ENCODE measurements at regions of chr12 and their contacts with region 1.

Region 1: DNA sequence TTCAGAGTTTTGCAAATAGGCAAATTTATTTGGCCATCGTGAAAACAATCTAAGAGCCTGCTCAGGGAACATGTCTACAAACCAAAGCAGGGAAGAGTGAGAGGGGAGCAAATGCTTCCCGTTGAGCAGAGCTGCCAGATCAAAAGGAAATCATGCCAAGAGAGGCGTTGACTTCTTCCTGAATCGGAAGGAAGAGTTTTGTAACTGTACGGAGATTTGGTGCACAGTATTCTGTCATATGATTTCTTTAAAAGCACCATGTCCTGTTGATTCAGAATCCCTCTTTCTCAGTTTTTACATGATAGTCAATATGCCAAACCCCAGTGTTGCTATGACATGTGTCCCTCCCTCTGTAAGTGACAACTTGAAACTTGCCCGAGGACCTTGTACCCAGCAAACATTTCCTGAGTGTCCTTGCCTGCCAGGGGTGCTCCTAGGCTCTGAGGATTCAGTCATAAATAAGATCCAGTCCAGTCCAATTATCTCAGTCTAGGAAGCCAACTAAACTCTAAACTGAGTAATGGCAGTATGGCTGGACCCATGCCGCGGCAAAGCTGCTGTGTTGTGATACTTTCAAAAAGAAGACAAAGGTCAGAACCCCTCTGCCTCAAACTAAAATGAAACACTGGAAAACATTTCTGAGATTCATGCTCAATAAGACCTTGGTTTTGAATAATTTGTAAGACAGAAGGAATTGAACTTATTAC is 300.1 kb upstream of the FKBP4 start:
- DNase-seq: no peak
- ATAC-seq: peak; percentile 71

Region 2: DNA sequence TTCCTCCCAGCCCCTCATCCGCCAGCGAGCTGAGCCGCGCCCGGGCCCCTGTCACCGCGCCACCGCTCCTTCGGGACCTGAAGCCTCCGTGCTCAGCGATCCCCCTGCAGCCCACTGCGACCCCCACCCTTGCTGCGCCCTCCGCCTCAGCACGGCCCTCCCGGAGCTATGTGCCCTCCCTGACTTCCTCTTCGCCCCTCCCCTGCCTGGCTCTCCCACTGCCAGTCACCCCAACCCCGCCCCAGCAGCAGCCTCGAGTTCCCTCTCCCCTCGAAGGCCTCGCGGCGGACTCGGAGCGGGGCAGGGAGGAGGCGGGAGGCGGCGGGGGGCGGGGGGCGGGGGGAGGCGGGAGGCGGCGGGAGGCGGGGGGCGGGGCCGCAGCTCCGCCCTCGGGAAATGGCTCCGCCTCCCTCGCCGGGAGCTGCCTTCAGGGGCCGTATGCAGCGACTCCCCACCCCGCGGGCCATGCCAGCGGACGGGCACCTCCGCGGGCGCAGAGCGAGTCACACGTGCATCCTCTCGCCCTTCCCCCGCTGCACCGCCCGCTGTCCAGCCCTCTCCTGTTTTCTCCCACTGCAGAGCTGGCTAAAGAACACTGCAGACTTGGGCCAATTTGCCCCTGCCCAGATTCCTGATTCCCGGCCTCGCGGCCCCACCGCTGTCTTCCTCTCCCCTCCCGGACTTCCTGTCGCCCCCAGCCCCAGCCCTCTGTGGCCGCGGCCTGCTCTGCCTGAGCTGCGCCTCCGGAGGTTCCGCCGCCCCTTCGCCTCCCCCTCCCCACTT is 832.9 kb before region 1 on chr12:
- intact Hi-C with region 1: loop called (anchors 5 kb)
- DNase-seq: peak; percentile 96
- ATAC-seq: peak; percentile 85

Region 3: GRCh38 chr12:2395354-2395977 is 99.2 kb before region 1 on chr12:
- intact Hi-C with region 1: loop called (anchors 5 kb)
- DNase-seq: no peak
- ATAC-seq: no peak

Region 4: GRCh38 chr12:2457933-2458414 is 36.7 kb before region 1 on chr12:
- intact Hi-C with region 1: loop called (anchors 1 kb)
- DNase-seq: no peak
- ATAC-seq: no peak